ENCODE measurements at regions of chr16 and their contacts with region 1.

Region 1: GRCh38 chr16:88376835-88377726 is 5.7 kb upstream of the ZNF469 start:
- DNase-seq: peak in 1 of 2 experiments; percentile 44
- H3K4me3 ChIP-seq: no peak overlapping the region
- H3K27ac ChIP-seq: no peak overlapping the region
- H3K4me1 ChIP-seq: no peaks in the 10 kb centered on the region
- H3K27me3 ChIP-seq: no peaks in the 10 kb centered on the region
- CTCF ChIP-seq: no peak

Region 2: DNA sequence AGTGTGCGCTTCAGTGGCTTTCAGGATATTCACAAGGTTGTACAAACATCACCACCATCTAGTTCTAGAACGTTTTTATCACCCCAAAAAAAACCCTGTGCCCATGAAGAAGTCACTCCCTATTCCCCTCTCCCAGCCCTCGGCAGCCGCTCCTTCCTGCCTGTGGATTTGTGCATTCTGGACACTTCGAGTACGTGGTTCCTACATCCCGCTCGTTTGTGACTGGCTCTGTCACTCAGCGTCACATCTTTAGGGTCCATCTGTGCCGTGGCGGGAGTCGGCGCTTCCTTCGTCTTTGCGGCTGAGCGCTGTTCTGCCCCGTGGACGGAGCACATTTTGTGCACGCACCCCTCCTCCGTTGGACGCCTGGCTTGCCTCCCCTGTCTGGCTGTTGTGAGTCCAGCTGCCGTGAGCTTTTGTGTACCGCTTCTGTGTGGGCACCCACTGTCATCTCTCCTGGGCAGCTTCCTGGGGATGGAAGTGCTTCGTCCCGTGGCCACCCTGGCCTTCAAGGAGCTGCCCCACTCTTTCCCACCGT is 12.0 kb after region 1 on chr16:
- CTCF ChIA-PET with region 1: no interaction called
- POLR2A ChIA-PET with region 1: interaction called, 18 read pairs
- intact Hi-C with region 1: no loop called
- DNase-seq: no peak
- H3K4me3 ChIP-seq: no peak overlapping the region
- H3K27ac ChIP-seq: peak overlapping the region; percentile 75
- H3K4me1 ChIP-seq: peaks cover 25% of the 10 kb centered on the region
- H3K27me3 ChIP-seq: no peaks in the 10 kb centered on the region; the same call in 1 of the 2 replicates
- CTCF ChIP-seq: no peak